ENCODE measurements at regions of chr5 and their contacts with region 1.

Region 1: GRCh38 chr5:69093771-69094482 is at the start of gene SLC30A5:
- DNase-seq: peak; percentile 99
- H3K4me3 Mint-ChIP-seq: peak within 1 kb of the TSS; percentile 91
- H3K27ac Mint-ChIP-seq: peak within 1 kb of the TSS; percentile 89
- H3K4me1 Mint-ChIP-seq: peaks cover 26% of the 10 kb centered on the region
- H3K27me3 Mint-ChIP-seq: no peaks in the 10 kb centered on the region
- total RNA-seq, gene SLC30A5: 42.8 to 49.0 TPM

Region 2: GRCh38 chr5:68149189-68149588 is 944.7 kb before region 1 on chr5:
- CTCF ChIA-PET with region 1: no interaction called
- POLR2A ChIA-PET with region 1: no interaction called
- intact Hi-C with region 1: no loop called
- DNase-seq: no peak
- H3K4me3 Mint-ChIP-seq: no peak overlapping the region
- H3K27ac Mint-ChIP-seq: no peak overlapping the region
- H3K4me1 Mint-ChIP-seq: peaks cover 6% of the 10 kb centered on the region
- H3K27me3 Mint-ChIP-seq: no peaks in the 10 kb centered on the region

Region 3: DNA sequence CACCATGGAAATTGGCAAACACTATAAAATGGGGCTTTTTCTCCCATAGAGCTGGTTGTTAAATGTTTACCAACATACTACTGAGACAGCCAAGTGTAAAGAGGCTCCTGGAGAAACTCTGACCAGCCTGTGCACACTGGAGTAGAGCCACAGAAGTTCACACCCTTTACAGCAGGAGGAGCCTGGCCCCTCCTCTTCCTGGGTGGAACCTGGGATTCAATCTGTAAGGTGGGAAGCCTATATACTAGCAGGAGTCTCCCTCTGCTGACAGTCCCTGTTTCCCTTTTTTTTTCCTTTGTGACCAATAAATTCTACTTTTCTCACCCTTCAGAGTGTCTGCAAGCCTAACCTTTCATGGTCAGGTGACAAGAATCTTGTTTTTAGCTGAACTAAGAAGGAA is 10.5 kb before region 1 on chr5:
- CTCF ChIA-PET with region 1: interaction called, 17 read pairs
- POLR2A ChIA-PET with region 1: interaction called, 3 read pairs
- intact Hi-C with region 1: no loop called
- DNase-seq: no peak
- H3K4me3 Mint-ChIP-seq: no peak overlapping the region
- H3K27ac Mint-ChIP-seq: no peak overlapping the region
- H3K4me1 Mint-ChIP-seq: peaks cover 5% of the 10 kb centered on the region
- H3K27me3 Mint-ChIP-seq: no peaks in the 10 kb centered on the region

Region 4: GRCh38 chr5:69166686-69167492 is 73.0 kb after region 1 on chr5 and contains the start of gene CCNB1:
- CTCF ChIA-PET with region 1: interaction called, 11 read pairs
- POLR2A ChIA-PET with region 1: interaction called, 9 read pairs
- intact Hi-C with region 1: loop called (anchors 1 kb)
- DNase-seq: peak; percentile 99
- H3K4me3 Mint-ChIP-seq: peak within 1 kb of the TSS; percentile 92
- H3K27ac Mint-ChIP-seq: peak within 1 kb of the TSS; percentile 78
- H3K4me1 Mint-ChIP-seq: peaks cover 28% of the 10 kb centered on the region
- H3K27me3 Mint-ChIP-seq: no peaks in the 10 kb centered on the region
- total RNA-seq, gene CCNB1: 178 to 189 TPM

Region 5: GRCh38 chr5:69217548-69218526 is 123.9 kb after region 1 on chr5:
- CTCF ChIA-PET with region 1: interaction called, 4 read pairs
- POLR2A ChIA-PET with region 1: no interaction called
- intact Hi-C with region 1: loop called (anchors 1 kb)
- DNase-seq: peak; percentile 96
- H3K4me3 Mint-ChIP-seq: peak overlapping the region; percentile 97
- H3K27ac Mint-ChIP-seq: peak overlapping the region; percentile 93
- H3K4me1 Mint-ChIP-seq: peaks cover 15% of the 10 kb centered on the region
- H3K27me3 Mint-ChIP-seq: no peaks in the 10 kb centered on the region

Region 6: DNA sequence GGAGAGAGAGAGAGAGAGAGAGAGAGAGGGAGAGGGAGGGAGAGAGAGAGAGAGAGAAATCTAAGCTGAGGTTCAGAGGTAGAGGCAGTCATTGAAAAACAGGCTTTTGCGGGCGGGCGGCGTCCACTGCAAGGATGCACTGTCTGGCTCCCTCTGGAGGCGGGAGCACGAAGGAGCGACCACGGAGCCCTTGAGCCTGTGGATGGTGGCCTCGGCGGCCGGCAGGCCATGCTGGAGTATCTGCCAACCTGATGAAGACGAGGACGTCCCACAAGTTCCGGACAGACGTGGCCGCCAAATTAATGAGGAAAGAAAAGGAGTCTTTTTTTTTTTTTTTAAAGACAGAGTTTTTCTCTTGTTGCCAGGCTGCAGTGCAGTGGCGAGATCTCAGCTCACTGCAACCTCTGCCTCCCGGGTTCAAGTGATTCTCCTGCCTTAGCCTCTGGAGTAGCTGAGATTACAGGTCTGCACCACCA is 240.9 kb after region 1 on chr5:
- CTCF ChIA-PET with region 1: interaction called, 37 read pairs
- POLR2A ChIA-PET with region 1: interaction called, 4 read pairs
- intact Hi-C with region 1: loop called (anchors 1 kb)
- DNase-seq: peak; percentile 88
- H3K4me3 Mint-ChIP-seq: no peak overlapping the region
- H3K27ac Mint-ChIP-seq: no peak overlapping the region
- H3K4me1 Mint-ChIP-seq: peaks cover 17% of the 10 kb centered on the region
- H3K27me3 Mint-ChIP-seq: no peaks in the 10 kb centered on the region

Measured in activated CD4-positive, alpha-beta memory T cell treated with anti-CD3 and anti-CD28 coated beads for 36 hours (primary cell).